Naive thymus-derived CD4-positive, alpha-beta T cell (primary cell): ENCODE measurements at regions of chr6 and their contacts with region 1.

Region 1: GRCh38 chr6:12163149-12163548 is 127.0 kb upstream of the EDN1 start:
- DNase-seq: peak in 8 of 9 donors; percentile 24 to 76 (median 65)
- ATAC-seq: peak; percentile 90
- H3K4me3 ChIP-seq: no peak overlapping the region
- H3K4me3 Mint-ChIP-seq: peak overlapping the region; percentile 6 to 77 (median 62)
- H3K27ac ChIP-seq: no peak overlapping the region
- H3K27ac Mint-ChIP-seq: peak overlapping the region; percentile 14 to 90 (median 64)
- H3K4me1 ChIP-seq: peaks cover 14 to 20% of the 10 kb centered on the region in 2 donors
- H3K4me1 Mint-ChIP-seq: peaks cover 25 to 54% (median 42%) of the 10 kb centered on the region in 7 donors
- H3K27me3 ChIP-seq: no peaks in the 10 kb centered on the region
- H3K27me3 Mint-ChIP-seq: no peaks in the 10 kb centered on the region

Region 2: DNA sequence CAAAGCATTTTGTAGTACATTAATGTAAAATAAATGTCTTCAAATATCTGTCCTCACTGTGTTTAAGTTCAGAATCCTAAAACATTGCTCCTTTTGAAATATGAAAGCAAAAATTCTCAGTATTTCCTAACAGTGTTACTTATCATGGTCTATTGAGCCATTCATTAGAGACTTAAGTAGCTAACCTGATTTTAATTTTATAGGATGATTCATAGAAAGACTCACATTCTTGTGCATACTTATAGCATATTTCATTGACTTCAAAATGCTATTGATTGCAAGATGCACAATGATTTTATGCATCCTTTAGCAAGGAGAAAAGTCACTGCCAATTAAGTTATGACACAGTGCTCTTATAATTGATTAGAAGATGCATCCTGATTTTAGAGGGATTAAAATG is 65.4 kb before region 1 on chr6:
- CTCF ChIA-PET with region 1: no interaction called
- POLR2A ChIA-PET with region 1: no interaction called
- intact Hi-C with region 1: loop called in 1 of 2 experiments (anchors 5 kb)
- DNase-seq: no peak
- ATAC-seq: no peak
- H3K4me3 ChIP-seq: no peak overlapping the region
- H3K4me3 Mint-ChIP-seq: no peak overlapping the region
- H3K27ac ChIP-seq: no peak overlapping the region
- H3K27ac Mint-ChIP-seq: no peak overlapping the region
- H3K4me1 ChIP-seq: peaks cover 0 to 12% of the 10 kb centered on the region in 2 donors
- H3K4me1 Mint-ChIP-seq: peaks cover 15 to 78% (median 64%) of the 10 kb centered on the region in 7 donors
- H3K27me3 ChIP-seq: no peaks in the 10 kb centered on the region
- H3K27me3 Mint-ChIP-seq: no peaks in the 10 kb centered on the region

Region 3: DNA sequence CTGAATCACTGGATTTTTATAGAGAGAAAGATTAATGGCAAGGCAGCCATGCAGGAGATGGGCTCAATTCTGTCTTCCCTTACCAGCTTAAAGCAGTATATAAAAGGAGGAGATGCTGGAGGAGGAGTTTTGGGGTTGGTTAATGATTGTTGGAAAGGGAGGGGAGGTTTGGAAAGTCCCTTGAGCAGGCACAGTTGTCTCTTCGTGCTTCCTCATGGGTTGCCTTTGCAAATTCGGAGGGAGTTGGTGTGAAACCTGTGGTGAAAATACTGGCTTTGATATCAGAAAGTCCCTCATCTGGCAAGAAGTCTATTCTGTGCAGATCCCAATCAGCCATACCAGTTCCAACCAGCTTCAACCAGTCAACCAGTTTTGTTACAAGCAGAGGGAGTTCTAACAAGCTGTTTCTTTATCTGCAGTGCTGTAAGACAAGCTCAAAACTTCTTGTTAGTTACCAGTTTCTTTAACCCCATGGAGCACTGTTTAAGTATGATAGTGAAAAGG is 44.0 kb before region 1 on chr6:
- CTCF ChIA-PET with region 1: no interaction called
- POLR2A ChIA-PET with region 1: no interaction called
- intact Hi-C with region 1: loop called in 1 of 2 experiments (anchors 1 kb)
- DNase-seq: peak in 8 of 9 donors; percentile 16 to 76 (median 48)
- ATAC-seq: peak; percentile 92
- H3K4me3 ChIP-seq: no peak overlapping the region
- H3K4me3 Mint-ChIP-seq: peak overlapping the region in 8 of 10 donors; percentile 1 to 56 (median 35)
- H3K27ac ChIP-seq: no peak overlapping the region
- H3K27ac Mint-ChIP-seq: peak overlapping the region; percentile 28 to 85 (median 68)
- H3K4me1 ChIP-seq: peaks cover 9 to 21% of the 10 kb centered on the region in 2 donors
- H3K4me1 Mint-ChIP-seq: peaks cover 28 to 81% (median 70%) of the 10 kb centered on the region in 7 donors
- H3K27me3 ChIP-seq: no peaks in the 10 kb centered on the region
- H3K27me3 Mint-ChIP-seq: no peaks in the 10 kb centered on the region

Region 4: DNA sequence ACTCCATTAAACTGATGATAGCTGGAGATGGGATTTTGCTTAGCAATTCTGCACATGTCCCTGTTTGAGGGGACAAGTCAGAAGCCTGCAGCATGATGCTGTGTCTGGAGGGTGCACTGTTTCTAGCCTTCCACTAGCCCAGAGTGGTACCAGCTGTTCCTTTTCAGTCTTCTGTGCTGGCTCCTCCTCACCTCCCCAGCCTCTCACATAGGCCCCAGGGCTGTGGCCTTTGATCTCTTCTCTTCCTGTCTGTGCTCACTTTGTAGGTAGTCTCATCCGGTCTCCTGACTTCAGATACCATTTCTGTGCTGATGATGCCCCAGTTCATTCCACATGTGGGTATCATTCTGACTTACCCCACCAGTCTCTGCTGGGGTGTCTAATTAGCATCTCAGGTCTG is 24.8 kb before region 1 on chr6:
- CTCF ChIA-PET with region 1: no interaction called
- POLR2A ChIA-PET with region 1: no interaction called
- intact Hi-C with region 1: loop called (anchors 2 kb)
- DNase-seq: peak in 7 of 9 donors; percentile 54 to 80 (median 75)
- ATAC-seq: peak; percentile 99
- H3K4me3 ChIP-seq: no peak overlapping the region
- H3K4me3 Mint-ChIP-seq: peak overlapping the region in 9 of 10 donors; percentile 2 to 79 (median 51)
- H3K27ac ChIP-seq: no peak overlapping the region
- H3K27ac Mint-ChIP-seq: peak overlapping the region; percentile 12 to 90 (median 79)
- H3K4me1 ChIP-seq: peaks cover 4 to 19% of the 10 kb centered on the region in 2 donors
- H3K4me1 Mint-ChIP-seq: peaks cover 19 to 44% (median 35%) of the 10 kb centered on the region in 7 donors
- H3K27me3 ChIP-seq: no peaks in the 10 kb centered on the region
- H3K27me3 Mint-ChIP-seq: no peaks in the 10 kb centered on the region

Region 5: GRCh38 chr6:12182676-12183075 is 19.5 kb after region 1 on chr6:
- CTCF ChIA-PET with region 1: no interaction called
- POLR2A ChIA-PET with region 1: no interaction called
- intact Hi-C with region 1: no loop called
- DNase-seq: no peak
- ATAC-seq: peak; percentile 49
- H3K4me3 ChIP-seq: no peak overlapping the region
- H3K4me3 Mint-ChIP-seq: no peak overlapping the region
- H3K27ac ChIP-seq: no peak overlapping the region
- H3K27ac Mint-ChIP-seq: no peak overlapping the region
- H3K4me1 ChIP-seq: no peaks in the 10 kb centered on the region
- H3K4me1 Mint-ChIP-seq: peaks cover 0 to 10% (median 6%) of the 10 kb centered on the region in 7 donors
- H3K27me3 ChIP-seq: no peaks in the 10 kb centered on the region
- H3K27me3 Mint-ChIP-seq: peaks cover 0 to 31% (median 0%) of the 10 kb centered on the region in 5 donors